Gastrocnemius medialis (tissue), 4 donors: ENCODE measurements at regions of chr17 and their contacts with region 1.

Region 1: GRCh38 chr17:56715613-56716357 is 117.9 kb downstream of the C17orf67 start:
- DNase-seq: peak; percentile 55 to 68
- ATAC-seq: peak; percentile 89 to 98
- H3K4me3 ChIP-seq: no peak overlapping the region
- H3K27ac ChIP-seq: no peak overlapping the region
- H3K4me1 ChIP-seq: no peaks in the 10 kb centered on the region
- H3K27me3 ChIP-seq: no peaks in the 10 kb centered on the region
- CTCF ChIP-seq: peak; percentile 69 to 87 (median 84)
- POLR2A ChIP-seq: no peak

Region 2: DNA sequence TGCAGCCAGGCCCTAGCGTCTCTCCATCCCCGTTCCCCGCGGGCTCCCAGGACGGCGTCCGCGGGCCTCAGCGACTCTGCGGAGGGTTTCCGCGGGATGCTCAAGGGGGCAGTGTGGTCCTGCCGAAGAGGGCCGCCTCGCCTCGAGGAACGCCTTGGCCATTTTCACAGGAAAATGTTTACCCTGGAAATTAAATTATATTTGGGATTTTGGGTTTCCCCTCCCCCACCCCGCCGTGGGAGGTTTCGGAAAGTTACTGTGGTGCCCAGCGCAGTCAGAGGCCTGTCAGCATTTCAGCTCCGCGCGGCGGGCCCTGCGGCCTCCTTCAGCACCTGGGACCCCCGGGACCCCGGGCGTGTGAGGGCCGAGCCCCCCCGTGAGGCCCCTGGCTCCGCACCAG is 870.4 kb before region 1 on chr17:
- in situ Hi-C with region 1: loop called in 1 of 4 experiments (anchors 25 kb)
- intact Hi-C with region 1: loop called (anchors 10 kb)
- DNase-seq: peak; percentile 14 to 25
- ATAC-seq: peak; percentile 53 to 66
- H3K4me3 ChIP-seq: peak overlapping the region in 2 of 4 donors; percentile 31 to 35
- H3K27ac ChIP-seq: no peak overlapping the region
- H3K4me1 ChIP-seq: peaks cover 0 to 6% of the 10 kb centered on the region in 2 donors
- H3K27me3 ChIP-seq: no peaks in the 10 kb centered on the region
- CTCF ChIP-seq: peak in 4 of 5 experiments; percentile 14 to 58 (median 48)
- POLR2A ChIP-seq: no peak

Region 3: DNA sequence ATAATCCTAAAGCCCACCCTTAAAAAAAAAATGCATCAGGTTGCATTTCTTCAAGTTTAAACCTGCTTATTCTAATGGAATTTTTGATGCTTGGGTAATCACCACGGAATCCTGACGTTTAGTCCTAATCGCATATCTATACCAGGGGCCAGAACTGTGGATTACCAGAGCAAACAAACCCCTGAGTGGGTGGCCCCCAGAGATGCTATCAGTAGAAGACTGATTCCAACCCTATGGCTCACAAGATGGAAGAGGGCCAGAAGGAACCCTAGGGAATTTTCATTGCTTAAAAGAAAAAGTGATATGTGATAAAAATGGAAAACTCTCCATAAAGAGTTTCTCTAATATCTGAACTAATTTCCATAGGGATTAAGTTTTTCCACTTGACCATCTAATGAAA is 274.5 kb before region 1 on chr17:
- in situ Hi-C with region 1: no loop called
- intact Hi-C with region 1: no loop called
- DNase-seq: no peak
- ATAC-seq: no peak
- H3K4me3 ChIP-seq: no peak overlapping the region
- H3K27ac ChIP-seq: no peak overlapping the region
- H3K4me1 ChIP-seq: no peaks in the 10 kb centered on the region
- H3K27me3 ChIP-seq: no peaks in the 10 kb centered on the region
- CTCF ChIP-seq: no peak
- POLR2A ChIP-seq: no peak

Region 4: DNA sequence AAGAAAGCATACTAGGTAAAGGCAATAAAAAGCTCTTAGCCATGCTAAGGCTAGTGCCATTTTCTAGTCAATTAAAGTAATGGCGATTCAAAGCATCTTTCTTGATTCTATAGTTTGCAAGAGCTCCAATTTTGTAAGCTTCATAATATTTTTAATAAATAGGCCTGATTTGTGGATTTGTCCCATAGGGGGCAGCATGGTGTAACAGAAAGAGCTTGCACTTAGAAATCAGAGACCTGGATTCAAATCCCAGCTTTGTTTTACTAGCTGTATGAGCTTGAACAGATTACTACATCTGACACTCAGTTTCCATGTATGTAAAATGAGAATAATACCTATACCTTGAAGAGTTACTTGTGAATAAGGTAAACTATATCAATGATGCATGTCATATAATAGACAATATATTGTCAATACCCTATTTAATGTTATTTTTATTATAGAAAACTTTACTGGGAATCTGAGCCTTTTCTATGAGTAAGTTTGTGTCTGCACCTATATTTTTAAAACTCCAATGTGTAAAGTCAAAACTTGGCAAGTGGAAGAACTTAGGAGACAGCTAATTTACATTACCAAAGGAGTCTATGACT is 215.9 kb before region 1 on chr17:
- in situ Hi-C with region 1: loop called (anchors 5 to 25 kb)
- intact Hi-C with region 1: loop called (anchors 1 kb)
- DNase-seq: no peak
- ATAC-seq: peak in 1 of 2 donors; percentile 48
- H3K4me3 ChIP-seq: no peak overlapping the region
- H3K27ac ChIP-seq: no peak overlapping the region
- H3K4me1 ChIP-seq: peaks cover 13 to 17% of the 10 kb centered on the region in 2 donors
- H3K27me3 ChIP-seq: no peaks in the 10 kb centered on the region
- CTCF ChIP-seq: peak; percentile 32 to 63 (median 48)
- POLR2A ChIP-seq: no peak

Region 5: DNA sequence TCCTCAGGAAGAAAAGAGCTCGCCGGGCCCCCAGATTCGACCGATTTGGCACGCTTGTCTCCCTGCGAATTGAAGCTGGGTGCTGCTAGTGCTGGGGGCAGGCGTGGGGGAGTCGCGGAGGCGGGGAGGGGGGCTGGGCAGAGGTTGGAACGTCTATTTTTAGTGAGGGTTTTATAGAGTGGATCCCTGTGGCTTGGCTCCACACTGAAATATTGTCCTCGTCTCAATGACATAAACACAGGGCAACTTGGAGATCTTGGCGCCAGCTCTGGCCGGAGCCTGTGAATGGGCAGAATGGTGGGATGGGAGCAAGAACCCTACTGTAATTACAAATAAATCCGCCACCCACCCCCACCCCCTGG is 138.0 kb before region 1 on chr17:
- in situ Hi-C with region 1: loop called in 1 of 4 experiments (anchors 10 kb)
- intact Hi-C with region 1: no loop called
- DNase-seq: peak; percentile 54 to 76
- ATAC-seq: peak; percentile 79 to 81
- H3K4me3 ChIP-seq: peak overlapping the region; percentile 23 to 45 (median 40)
- H3K27ac ChIP-seq: peak overlapping the region; percentile 66 to 92 (median 86)
- H3K4me1 ChIP-seq: peaks cover 40 to 52% of the 10 kb centered on the region in 2 donors
- H3K27me3 ChIP-seq: no peaks in the 10 kb centered on the region
- CTCF ChIP-seq: no peak
- POLR2A ChIP-seq: no peak

Region 6: GRCh38 chr17:56679115-56679766 is 36.5 kb before region 1 on chr17:
- in situ Hi-C with region 1: no loop called
- intact Hi-C with region 1: loop called (anchors 5 kb)
- DNase-seq: no peak
- ATAC-seq: peak; percentile 38 to 63
- H3K4me3 ChIP-seq: peak overlapping the region; percentile 27 to 56 (median 38)
- H3K27ac ChIP-seq: no peak overlapping the region
- H3K4me1 ChIP-seq: peaks cover 4 to 10% of the 10 kb centered on the region in 2 donors
- H3K27me3 ChIP-seq: peaks cover 0 to 4% (median 0%) of the 10 kb centered on the region in 3 donors
- CTCF ChIP-seq: peak; percentile 24 to 67 (median 40)
- POLR2A ChIP-seq: no peak

Region 7: GRCh38 chr17:56779898-56780733 is 64.3 kb after region 1 on chr17:
- in situ Hi-C with region 1: no loop called
- intact Hi-C with region 1: loop called (anchors 1 kb)
- DNase-seq: peak; percentile 58 to 64
- ATAC-seq: peak; percentile 59 to 80
- H3K4me3 ChIP-seq: peak overlapping the region; percentile 39 to 61 (median 46)
- H3K27ac ChIP-seq: peak overlapping the region in 2 of 4 donors; percentile 36 to 78
- H3K4me1 ChIP-seq: peaks cover 21 to 46% of the 10 kb centered on the region in 2 donors
- H3K27me3 ChIP-seq: no peaks in the 10 kb centered on the region
- CTCF ChIP-seq: peak; percentile 82 to 99 (median 95)
- POLR2A ChIP-seq: no peak